ENCODE measurements at regions of chr4 and their contacts with region 1.

Region 1: DNA sequence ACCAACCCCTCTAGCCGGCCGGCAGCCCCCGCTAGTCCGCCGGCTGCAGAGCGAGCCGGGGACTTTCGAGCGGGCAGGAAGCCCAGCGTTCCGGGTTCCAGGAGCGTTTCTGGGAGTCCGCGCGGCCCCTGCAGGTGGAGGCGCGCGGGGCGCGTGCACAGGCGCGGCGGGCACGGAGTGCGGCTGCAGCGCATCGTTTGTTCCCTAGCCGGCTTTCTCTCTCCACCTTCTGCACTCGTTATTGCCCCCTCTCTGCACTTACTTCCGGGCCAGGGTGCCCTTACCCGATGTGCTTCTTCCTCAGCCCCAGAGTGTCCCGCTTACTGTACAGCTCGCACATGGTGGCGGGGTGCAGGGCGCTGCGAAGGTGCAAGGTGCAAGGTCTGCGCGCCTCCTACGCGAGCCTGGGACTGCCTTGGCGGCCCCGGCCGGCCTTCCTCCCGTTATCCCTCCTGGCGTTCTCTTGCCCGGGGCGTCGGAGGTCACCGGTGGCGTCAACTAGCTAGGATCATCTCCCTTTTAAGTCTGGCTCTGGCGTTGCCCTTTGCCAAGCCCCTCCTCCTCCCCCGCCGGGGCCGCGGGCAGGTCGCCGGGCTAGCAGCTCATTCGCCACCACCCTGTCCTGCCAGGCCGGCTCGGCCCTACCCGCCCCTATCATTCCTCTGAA is at the start of gene ETNPPL:
- DNase-seq: peak; percentile 21
- ATAC-seq: peak; percentile 88
- H3K4me3 ChIP-seq: peak within 1 kb of the TSS; percentile 69 to 92 (median 82)
- H3K27ac ChIP-seq: peak within 1 kb of the TSS; percentile 72
- H3K4me1 ChIP-seq: peaks cover 37% of the 10 kb centered on the region
- H3K27me3 ChIP-seq: no peaks in the 10 kb centered on the region; a peak in 2 of 5 replicates
- CTCF ChIP-seq: peak; percentile 48
- EP300 ChIP-seq: no peak
- POLR2A ChIP-seq: peak in 1 of 2 experiments; percentile 77; a peak in 2 of 4 replicates
- RAD21 ChIP-seq: no peak
- total RNA-seq, gene ETNPPL: 6.0 and 10.2 TPM in 2 replicates

Region 2: DNA sequence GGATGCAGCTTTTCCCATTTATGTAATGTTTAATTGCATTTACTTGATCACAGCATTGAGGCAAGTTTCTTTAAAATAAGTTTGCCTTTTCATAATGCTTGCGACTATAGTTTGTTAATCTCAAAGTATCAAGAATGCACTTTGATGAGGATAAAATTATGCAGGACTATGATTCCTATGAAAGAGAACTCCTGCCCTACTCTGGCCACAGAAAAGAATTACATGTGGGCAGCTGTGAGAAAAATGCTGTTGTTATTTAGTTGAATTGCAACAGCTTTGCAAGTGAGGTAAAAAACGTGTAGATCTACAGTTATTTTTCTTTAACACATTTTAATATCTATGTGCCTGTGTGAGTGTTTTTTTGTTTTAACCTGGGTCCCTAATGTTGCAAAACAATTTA is 124.8 kb before region 1 on chr4:
- CTCF ChIA-PET with region 1: no interaction called
- POLR2A ChIA-PET with region 1: no interaction called
- in situ Hi-C with region 1: no loop called
- intact Hi-C with region 1: no loop called
- DNase-seq: no peak
- ATAC-seq: no peak
- H3K4me3 ChIP-seq: no peak overlapping the region
- H3K27ac ChIP-seq: no peak overlapping the region
- H3K4me1 ChIP-seq: no peaks in the 10 kb centered on the region
- H3K27me3 ChIP-seq: no peaks in the 10 kb centered on the region
- CTCF ChIP-seq: no peak
- EP300 ChIP-seq: no peak
- POLR2A ChIP-seq: no peak
- RAD21 ChIP-seq: no peak

Region 3: GRCh38 chr4:108730579-108730978 is 32.1 kb before region 1 on chr4:
- CTCF ChIA-PET with region 1: no interaction called
- POLR2A ChIA-PET with region 1: no interaction called
- in situ Hi-C with region 1: no loop called
- intact Hi-C with region 1: loop called (anchors 2 kb)
- DNase-seq: peak; percentile 70
- ATAC-seq: peak; percentile 100
- H3K4me3 ChIP-seq: no peak overlapping the region
- H3K27ac ChIP-seq: no peak overlapping the region
- H3K4me1 ChIP-seq: peaks cover 18% of the 10 kb centered on the region
- H3K27me3 ChIP-seq: no peaks in the 10 kb centered on the region
- CTCF ChIP-seq: no peak
- EP300 ChIP-seq: peak; percentile 21 to 59; a peak in 2 of 4 replicates
- POLR2A ChIP-seq: no peak
- RAD21 ChIP-seq: no peak

Measured in HepG2 (cell line).